ENCODE measurements at regions of chr14 and their contacts with region 1.

Region 1: GRCh38 chr14:24160850-24161804 is at the start of gene IRF9:
- DNase-seq: peak; percentile 92 to 99 (median 97)

Region 2: GRCh38 chr14:24042746-24043145 is 118.4 kb before region 1 on chr14:
- intact Hi-C with region 1: no loop called
- DNase-seq: no peak

Region 3: DNA sequence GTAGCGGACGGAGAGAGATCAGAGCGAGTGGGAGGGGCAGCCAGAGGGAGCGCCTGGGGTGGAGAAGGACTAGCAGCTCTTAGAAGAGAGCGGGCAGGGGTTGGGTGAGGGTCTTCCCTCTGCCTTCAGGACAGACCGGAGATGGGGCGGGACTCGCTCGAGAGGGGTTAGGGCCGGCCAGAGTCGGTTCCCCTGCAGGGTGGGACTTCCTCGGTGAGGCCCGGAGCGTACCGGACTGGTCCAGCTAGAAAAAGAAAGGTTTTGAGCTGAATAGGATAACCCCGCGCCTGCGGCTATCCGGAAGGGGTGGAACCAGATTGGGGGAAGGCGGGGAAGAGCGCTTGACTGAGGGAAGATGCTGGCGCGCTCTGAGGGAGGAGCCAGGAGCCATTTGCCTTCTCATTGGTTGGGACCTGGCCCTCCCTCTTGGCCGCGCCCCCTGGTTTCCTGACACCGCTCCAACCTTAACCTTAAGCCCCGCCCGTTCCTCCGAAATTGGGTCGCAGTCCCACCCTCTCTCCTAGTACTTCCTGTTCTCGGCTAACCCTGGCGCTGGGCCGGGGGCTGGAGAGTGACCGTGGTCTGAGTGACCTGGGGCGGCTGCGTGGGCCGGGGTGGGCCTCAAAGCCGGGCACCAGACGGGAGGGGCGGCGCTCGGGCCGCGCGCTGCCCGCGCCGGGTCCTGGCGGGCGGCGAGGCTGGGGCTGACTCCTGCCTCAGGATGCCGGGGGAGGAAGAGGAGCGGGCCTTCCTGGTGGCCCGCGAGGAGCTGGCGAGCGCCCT is 14.0 kb before region 1 on chr14 and contains the start of gene RNF31:
- intact Hi-C with region 1: loop called (anchors 2 kb)
- DNase-seq: peak; percentile 96 to 100 (median 98)

Region 4: GRCh38 chr14:24188251-24189058 is 27.3 kb after region 1 on chr14 and contains the start of gene IPO4:
- intact Hi-C with region 1: loop called (anchors 2 kb)
- DNase-seq: peak; percentile 93 to 99 (median 95)

Region 5: DNA sequence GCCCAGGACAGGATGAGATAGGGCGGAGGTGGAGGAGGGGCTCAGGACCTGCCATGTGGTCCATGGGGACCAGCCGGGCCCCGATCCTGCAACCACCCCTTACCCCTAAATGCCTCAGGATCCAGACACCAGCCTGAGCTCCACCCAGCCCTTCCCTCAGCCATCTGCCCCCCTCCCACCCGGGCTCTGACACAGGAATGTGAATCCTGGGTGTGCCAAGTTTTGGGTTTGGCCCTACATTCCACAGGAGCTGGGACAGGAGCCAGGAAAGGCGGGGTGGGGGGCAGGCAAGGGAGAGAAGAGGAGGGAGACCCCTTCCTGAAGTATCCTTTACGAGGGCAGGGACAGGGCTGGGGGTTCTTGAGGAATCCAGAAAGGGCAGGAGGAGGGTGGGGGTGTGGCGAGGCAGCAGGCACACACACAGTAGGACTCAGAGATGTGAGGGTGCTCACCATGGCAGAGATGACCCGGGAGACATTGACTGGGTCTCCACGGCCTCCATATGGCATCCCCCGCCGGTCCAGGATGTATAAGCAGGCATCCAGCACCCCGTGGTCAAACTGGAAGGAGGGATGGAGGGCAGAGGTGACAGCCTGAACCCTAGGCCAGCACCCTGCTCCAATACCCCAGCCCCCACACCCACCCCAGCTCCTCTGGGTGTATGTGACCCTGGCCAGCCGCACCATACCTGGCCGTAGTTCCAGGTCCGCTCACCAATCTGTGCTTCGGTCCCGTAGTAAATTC is 98.3 kb after region 1 on chr14:
- intact Hi-C with region 1: no loop called
- DNase-seq: peak in 3 of 10 donors; percentile 33 to 68 (median 48)